ENCODE measurements at regions of chr5 and their contacts with region 1.

Region 1: DNA sequence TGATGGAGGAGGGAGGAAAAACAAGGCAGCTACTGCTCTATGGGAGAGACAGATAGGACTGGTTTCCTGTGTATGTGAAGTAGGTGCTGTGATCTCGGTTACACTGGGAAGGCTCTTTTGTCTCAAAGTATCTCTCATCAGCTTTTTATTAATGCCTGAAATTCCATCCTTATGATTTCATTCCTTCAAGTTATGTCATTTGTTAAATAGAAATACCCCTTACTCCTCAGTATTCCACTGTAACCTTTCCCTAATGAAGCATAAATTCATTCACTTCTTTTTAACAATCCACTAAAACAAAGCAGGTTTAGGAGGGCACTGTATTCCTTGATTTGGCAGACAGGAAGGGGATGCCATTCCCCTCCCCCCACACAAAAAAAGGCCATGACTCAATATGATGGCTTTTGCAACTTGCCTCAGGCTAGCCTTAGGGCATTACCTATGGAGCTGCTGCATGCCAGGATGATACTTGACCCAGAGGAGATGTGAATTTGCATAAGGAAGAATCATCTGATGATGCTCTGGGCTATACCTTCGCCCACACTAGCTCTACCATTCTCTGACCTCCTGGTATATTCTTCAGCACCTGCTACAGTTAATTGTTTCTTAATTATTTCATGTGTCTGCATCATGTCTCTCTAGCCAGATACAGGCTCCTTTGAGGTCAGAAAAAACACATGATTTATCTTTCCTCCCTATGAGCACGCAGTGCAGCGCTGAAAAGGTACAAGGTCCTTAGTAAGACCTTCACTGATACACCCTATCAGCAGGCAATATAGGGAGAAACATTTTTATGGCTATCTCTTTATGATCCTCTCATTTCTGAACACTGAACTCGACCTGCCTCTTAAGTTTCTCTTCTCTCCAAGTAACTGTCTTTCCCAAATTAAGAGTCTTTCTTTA is 26.3 kb downstream of the NR3C1 start:
- DNase-seq: no peak
- H3K4me3 ChIP-seq: no peak overlapping the region
- H3K4me3 Mint-ChIP-seq: peak overlapping the region in 4 of 8 donors; percentile 0 to 61 (median 22)
- H3K27ac ChIP-seq: no peak overlapping the region
- H3K27ac Mint-ChIP-seq: peak overlapping the region; percentile 12 to 79 (median 47)
- H3K4me1 ChIP-seq: peaks cover 72% of the 10 kb centered on the region
- H3K4me1 Mint-ChIP-seq: peaks cover 65 to 94% (median 81%) of the 10 kb centered on the region in 4 donors
- H3K27me3 ChIP-seq: no peaks in the 10 kb centered on the region
- H3K27me3 Mint-ChIP-seq: no peaks in the 10 kb centered on the region

Region 2: DNA sequence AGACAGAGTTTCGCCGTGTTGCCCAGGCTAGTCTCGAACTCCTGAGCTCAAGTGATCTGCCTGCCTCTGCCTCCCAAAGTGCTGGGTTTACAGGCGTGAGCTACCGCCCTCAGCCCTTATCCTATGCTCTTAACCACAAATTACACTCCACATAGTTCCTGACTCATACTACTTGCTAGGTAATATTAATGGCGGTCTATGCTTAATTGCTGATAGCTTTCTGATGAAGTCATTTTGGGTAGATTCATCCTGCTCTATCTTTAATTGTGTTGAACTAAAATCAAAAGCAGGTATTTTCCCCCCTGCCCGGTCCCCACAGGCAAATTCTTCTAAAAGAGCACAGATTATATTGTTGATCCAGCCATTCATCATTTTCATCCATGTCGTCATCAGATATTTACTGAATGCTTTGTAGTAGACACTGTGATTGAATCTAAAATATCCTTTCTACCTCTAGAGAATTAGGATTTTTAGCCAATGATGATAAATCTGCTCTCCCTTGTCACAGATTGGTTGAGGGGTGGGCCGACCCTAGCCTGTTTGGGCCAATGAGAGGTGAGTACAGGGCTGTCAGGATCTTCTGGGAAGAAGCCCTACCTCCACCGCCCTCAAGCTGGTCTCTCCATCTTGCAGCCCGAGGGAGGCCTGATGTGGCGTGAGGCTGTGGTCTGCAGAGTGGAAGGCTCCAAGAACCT is 118.5 kb before region 1 on chr5:
- CTCF ChIA-PET with region 1: no interaction called
- POLR2A ChIA-PET with region 1: no interaction called
- intact Hi-C with region 1: no loop called
- DNase-seq: no peak
- H3K4me3 ChIP-seq: no peak overlapping the region
- H3K4me3 Mint-ChIP-seq: no peak overlapping the region
- H3K27ac ChIP-seq: no peak overlapping the region
- H3K27ac Mint-ChIP-seq: peak overlapping the region in 1 of 7 donors; percentile 21
- H3K4me1 ChIP-seq: no peaks in the 10 kb centered on the region
- H3K4me1 Mint-ChIP-seq: peaks cover 0 to 2% (median 0%) of the 10 kb centered on the region in 4 donors
- H3K27me3 ChIP-seq: no peaks in the 10 kb centered on the region
- H3K27me3 Mint-ChIP-seq: no peaks in the 10 kb centered on the region

Region 3: GRCh38 chr5:143338658-143339366 is 38.4 kb before region 1 on chr5:
- CTCF ChIA-PET with region 1: no interaction called
- POLR2A ChIA-PET with region 1: no interaction called
- intact Hi-C with region 1: loop called (anchors 5 kb)
- DNase-seq: peak in 1 of 5 donors; percentile 39
- H3K4me3 ChIP-seq: no peak overlapping the region
- H3K4me3 Mint-ChIP-seq: peak overlapping the region in 2 of 8 donors; percentile 7 to 25
- H3K27ac ChIP-seq: no peak overlapping the region
- H3K27ac Mint-ChIP-seq: peak overlapping the region in 5 of 7 donors; percentile 3 to 83 (median 50)
- H3K4me1 ChIP-seq: peaks cover 41% of the 10 kb centered on the region
- H3K4me1 Mint-ChIP-seq: peaks cover 38 to 66% (median 56%) of the 10 kb centered on the region in 4 donors
- H3K27me3 ChIP-seq: no peaks in the 10 kb centered on the region
- H3K27me3 Mint-ChIP-seq: no peaks in the 10 kb centered on the region

Region 4: DNA sequence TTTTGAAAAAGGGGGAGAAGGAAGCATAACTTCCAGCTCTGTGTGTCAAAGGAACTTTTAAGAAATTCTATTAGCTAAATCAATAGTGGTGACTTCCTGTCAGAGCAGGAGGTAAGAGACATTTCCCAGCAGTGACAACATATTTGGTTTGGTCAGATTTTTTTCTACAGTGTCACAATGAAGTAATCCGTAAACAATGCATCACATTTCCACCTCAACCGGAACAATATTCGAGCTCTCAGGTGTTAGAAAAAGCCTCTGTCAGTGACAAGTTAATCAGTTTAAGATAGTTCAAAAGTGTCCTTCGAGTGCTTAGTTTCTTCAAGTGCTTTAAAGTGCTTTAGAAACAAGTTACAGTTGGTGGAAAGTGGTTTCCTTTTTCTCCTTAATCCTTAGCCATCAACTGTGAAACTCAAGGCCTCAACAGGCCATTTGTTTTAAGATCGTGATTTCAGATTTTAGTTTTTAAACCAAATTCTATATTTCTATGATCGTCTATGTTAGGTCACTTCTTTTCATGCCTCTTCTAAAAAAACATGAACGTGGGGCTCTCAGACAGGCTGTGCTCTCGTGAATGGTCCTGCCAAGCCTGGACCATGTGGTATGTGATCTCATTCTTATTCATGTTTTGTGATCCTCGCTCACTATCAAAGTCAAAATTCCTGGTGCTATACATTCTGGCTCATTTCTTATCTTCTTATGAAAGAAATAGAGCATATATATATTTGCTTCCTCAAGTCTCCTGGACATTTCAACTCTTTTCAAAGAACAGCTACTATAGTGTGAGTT is 252.9 kb after region 1 on chr5:
- CTCF ChIA-PET with region 1: no interaction called
- POLR2A ChIA-PET with region 1: no interaction called
- intact Hi-C with region 1: no loop called
- DNase-seq: no peak
- H3K4me3 ChIP-seq: no peak overlapping the region
- H3K4me3 Mint-ChIP-seq: no peak overlapping the region
- H3K27ac ChIP-seq: no peak overlapping the region
- H3K27ac Mint-ChIP-seq: no peak overlapping the region
- H3K4me1 ChIP-seq: no peaks in the 10 kb centered on the region
- H3K4me1 Mint-ChIP-seq: no peaks in the 10 kb centered on the region
- H3K27me3 ChIP-seq: no peaks in the 10 kb centered on the region
- H3K27me3 Mint-ChIP-seq: no peaks in the 10 kb centered on the region

Measured in CD4-positive, alpha-beta memory T cell (primary cell).